HCT116 (cell line): ENCODE measurements at regions of chr16 and their contacts with region 1.

Region 1: DNA sequence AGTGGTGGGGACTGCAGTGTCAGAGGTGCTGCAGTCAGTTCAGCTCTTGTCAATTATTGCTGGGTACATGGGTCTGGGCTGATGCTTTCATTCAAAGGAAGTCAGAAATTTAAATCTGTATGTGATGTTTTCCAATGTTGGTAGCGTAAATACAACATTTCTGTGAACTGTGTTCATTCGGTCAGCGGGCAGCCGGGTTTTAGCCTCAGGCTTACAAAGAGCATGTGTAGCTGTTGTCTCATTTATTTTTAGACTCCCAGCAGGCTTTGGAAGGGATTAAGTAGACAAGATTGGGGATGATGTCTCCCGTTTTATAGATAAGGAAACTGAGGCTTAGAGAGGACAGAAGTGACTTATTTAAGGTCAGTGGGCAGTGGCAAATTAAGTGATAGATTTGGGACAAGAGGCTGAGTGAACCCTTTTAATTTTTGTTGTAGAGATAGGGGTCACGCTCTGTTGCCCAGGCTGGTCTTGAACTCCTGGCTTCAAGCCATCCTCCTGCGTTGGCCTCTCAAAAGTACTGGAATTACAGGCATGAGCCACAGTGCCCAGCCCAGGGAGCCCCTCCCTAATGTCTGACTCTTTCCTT is 8.1 kb downstream of the AQP8 start:
- DNase-seq: no peak
- ATAC-seq: peak; percentile 28
- H3K4me3 ChIP-seq: no peak overlapping the region
- H3K27ac ChIP-seq: no peak overlapping the region
- H3K4me1 ChIP-seq: peaks cover 0 to 11% of the 10 kb centered on the region in 2 experiments; a peak in 3 of 4 replicates
- H3K27me3 ChIP-seq: no peaks in the 10 kb centered on the region
- CTCF ChIP-seq: no peak
- POLR2A ChIP-seq: no peak
- RAD21 ChIP-seq: no peak

Region 2: DNA sequence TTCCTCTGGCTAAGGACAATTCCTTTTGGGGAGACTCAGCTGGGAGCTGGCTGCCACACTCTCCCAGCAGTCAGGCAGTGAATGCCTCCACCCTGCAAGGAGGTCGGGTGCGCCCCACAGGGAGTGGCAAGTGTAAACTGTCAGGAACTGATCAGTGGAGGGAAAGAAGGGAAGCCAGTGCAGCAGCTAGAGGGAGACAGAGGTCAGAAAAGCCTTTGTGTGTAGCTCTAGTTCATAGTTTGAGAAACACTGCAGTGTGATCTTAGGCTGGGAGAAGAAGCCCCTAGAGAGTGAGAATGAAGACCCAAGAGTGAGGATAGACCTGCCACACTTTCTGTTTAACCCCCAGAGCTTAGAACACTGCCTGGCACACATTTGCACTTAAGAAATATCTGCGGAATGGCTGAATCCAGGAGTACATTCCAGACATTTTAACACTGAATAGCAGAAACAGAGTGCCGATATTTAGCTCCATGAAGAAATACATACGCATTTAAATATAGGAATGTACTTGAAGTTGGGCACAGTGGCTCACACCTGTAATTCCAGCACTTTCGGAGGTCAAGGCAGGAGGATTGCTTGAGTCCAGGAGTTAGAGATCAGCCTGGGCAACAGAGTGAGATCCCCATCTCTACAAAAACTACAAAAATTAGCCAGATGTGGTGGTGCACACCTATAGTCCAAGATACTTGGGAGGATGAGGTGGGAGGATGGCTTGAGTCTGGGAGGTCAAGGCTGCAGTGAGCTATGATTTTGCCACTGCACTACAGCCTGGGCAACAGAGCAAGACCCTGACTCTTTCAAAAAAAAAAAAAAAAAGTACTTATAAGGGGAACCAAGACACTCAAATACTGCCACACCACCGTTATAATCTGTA is 390.1 kb before region 1 on chr16:
- CTCF ChIA-PET with region 1: interaction called, 19 read pairs
- POLR2A ChIA-PET with region 1: no interaction called
- RAD21 ChIA-PET with region 1: no interaction called
- intact Hi-C with region 1: no loop called
- DNase-seq: peak; percentile 18
- ATAC-seq: peak; percentile 92
- H3K4me3 ChIP-seq: no peak overlapping the region
- H3K27ac ChIP-seq: no peak overlapping the region
- H3K4me1 ChIP-seq: peaks cover 0 to 14% of the 10 kb centered on the region in 2 experiments; a peak in 2 of 4 replicates
- H3K27me3 ChIP-seq: no peaks in the 10 kb centered on the region
- CTCF ChIP-seq: peak; percentile 57 to 72 (median 57); a peak in 5 of 6 replicates
- POLR2A ChIP-seq: no peak
- RAD21 ChIP-seq: peak; percentile 81

Region 3: GRCh38 chr16:25051406-25052150 is 173.2 kb before region 1 on chr16:
- CTCF ChIA-PET with region 1: interaction called, 6 read pairs
- POLR2A ChIA-PET with region 1: interaction called, 3 read pairs
- RAD21 ChIA-PET with region 1: no interaction called
- intact Hi-C with region 1: loop called (anchors 1 kb)
- DNase-seq: no peak
- ATAC-seq: no peak
- H3K4me3 ChIP-seq: no peak overlapping the region
- H3K27ac ChIP-seq: no peak overlapping the region
- H3K4me1 ChIP-seq: peaks cover 25 to 47% of the 10 kb centered on the region in 2 experiments
- H3K27me3 ChIP-seq: no peaks in the 10 kb centered on the region
- CTCF ChIP-seq: no peak
- POLR2A ChIP-seq: no peak
- RAD21 ChIP-seq: no peak

Region 4: DNA sequence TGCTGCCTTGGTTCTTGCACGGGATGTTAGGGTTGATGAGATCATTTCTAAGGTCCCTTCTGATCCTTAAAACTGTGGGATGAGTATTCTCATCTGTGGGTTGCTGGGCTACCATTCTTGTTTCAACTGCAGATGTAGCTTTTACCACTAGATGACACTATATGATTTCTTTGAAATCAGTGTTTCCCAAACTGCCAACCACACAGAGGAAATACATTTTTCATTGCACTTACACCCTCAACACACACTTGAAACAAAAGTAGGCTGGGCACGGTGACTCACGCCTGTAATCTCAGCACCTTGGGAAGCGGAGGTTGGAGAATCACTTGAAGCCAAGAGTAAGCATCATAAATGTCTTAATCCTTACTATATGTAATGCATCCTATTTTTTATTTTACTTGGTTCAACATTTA is 98.0 kb before region 1 on chr16:
- CTCF ChIA-PET with region 1: interaction called, 20 read pairs
- POLR2A ChIA-PET with region 1: no interaction called
- RAD21 ChIA-PET with region 1: interaction called in 1 of 2 experiments, 7 read pairs
- intact Hi-C with region 1: loop called (anchors 1 kb)
- DNase-seq: no peak
- ATAC-seq: peak; percentile 87
- H3K4me3 ChIP-seq: no peak overlapping the region
- H3K27ac ChIP-seq: no peak overlapping the region
- H3K4me1 ChIP-seq: peaks cover 8 to 26% of the 10 kb centered on the region in 2 experiments
- H3K27me3 ChIP-seq: no peaks in the 10 kb centered on the region
- CTCF ChIP-seq: peak; percentile 71 to 87 (median 76)
- POLR2A ChIP-seq: no peak
- RAD21 ChIP-seq: peak; percentile 90

Region 5: GRCh38 chr16:25235991-25236390 is 11.2 kb after region 1 on chr16:
- CTCF ChIA-PET with region 1: interaction called, 12 read pairs
- POLR2A ChIA-PET with region 1: interaction called, 3 read pairs
- RAD21 ChIA-PET with region 1: no interaction called
- intact Hi-C with region 1: no loop called
- DNase-seq: no peak
- ATAC-seq: no peak
- H3K4me3 ChIP-seq: no peak overlapping the region
- H3K27ac ChIP-seq: no peak overlapping the region
- H3K4me1 ChIP-seq: peaks cover 0 to 5% of the 10 kb centered on the region in 2 experiments; a peak in 1 of 4 replicates
- H3K27me3 ChIP-seq: no peaks in the 10 kb centered on the region
- CTCF ChIP-seq: no peak
- POLR2A ChIP-seq: no peak
- RAD21 ChIP-seq: no peak

Region 6: DNA sequence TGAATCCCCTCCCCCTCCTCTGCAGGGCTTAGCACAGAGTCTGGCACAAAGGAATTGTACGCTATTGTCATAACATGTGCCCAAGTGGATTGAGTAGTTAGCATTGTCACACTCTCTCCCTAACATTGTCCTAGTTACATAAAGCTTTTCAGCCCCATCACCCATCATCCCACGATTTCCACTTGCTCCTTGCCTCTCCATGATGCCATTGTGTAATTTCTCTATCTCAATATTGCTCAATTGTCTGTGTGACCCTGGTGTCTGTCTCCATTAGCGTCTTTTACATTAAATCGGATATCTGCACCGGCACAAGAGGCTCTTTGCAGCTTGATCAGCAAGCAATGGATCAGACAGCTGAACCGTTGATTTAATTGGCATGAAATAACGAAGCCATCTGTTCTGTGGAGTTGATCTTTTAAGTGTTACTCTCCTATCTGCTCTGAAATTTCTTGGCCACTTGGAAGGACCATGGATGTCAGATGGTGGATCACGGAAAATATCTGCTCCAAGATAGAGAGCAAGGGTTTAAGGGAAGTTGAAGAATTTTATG is 390.0 kb after region 1 on chr16:
- CTCF ChIA-PET with region 1: no interaction called
- POLR2A ChIA-PET with region 1: no interaction called
- RAD21 ChIA-PET with region 1: no interaction called
- intact Hi-C with region 1: no loop called
- DNase-seq: no peak
- ATAC-seq: no peak
- H3K4me3 ChIP-seq: no peak overlapping the region
- H3K27ac ChIP-seq: no peak overlapping the region
- H3K4me1 ChIP-seq: no peaks in the 10 kb centered on the region
- H3K27me3 ChIP-seq: peaks cover 5% of the 10 kb centered on the region; the same call in 1 of the 2 replicates
- CTCF ChIP-seq: no peak
- POLR2A ChIP-seq: no peak
- RAD21 ChIP-seq: no peak